GM12878 (cell line): ENCODE measurements at regions of chr15 and their contacts with region 1.

Region 1: GRCh38 chr15:42504631-42505030 is 9.2 kb downstream of the SNAP23 start:
- DNase-seq: no peak
- ATAC-seq: peak; percentile 23
- H3K4me3 ChIP-seq: peak overlapping the region; percentile 44; the same call in 1 of the 2 replicates
- H3K27ac ChIP-seq: peak overlapping the region; percentile 81
- H3K4me1 ChIP-seq: peaks cover 50% of the 10 kb centered on the region
- H3K27me3 ChIP-seq: no peaks in the 10 kb centered on the region
- CTCF ChIP-seq: no peak
- EP300 ChIP-seq: no peak
- POLR2A ChIP-seq: no peak
- RAD21 ChIP-seq: no peak

Region 2: GRCh38 chr15:42332331-42332730 is 172.3 kb before region 1 on chr15:
- CTCF ChIA-PET with region 1: no interaction called
- POLR2A ChIA-PET with region 1: no interaction called
- RAD21 ChIA-PET with region 1: no interaction called
- SMC1A ChIA-PET with region 1: no interaction called
- in situ Hi-C with region 1: no loop called
- intact Hi-C with region 1: no loop called
- DNase-seq: no peak
- ATAC-seq: no peak
- H3K4me3 ChIP-seq: no peak overlapping the region
- H3K27ac ChIP-seq: no peak overlapping the region
- H3K4me1 ChIP-seq: no peaks in the 10 kb centered on the region
- H3K27me3 ChIP-seq: no peaks in the 10 kb centered on the region
- CTCF ChIP-seq: no peak
- EP300 ChIP-seq: no peak
- POLR2A ChIP-seq: no peak
- RAD21 ChIP-seq: no peak

Region 3: DNA sequence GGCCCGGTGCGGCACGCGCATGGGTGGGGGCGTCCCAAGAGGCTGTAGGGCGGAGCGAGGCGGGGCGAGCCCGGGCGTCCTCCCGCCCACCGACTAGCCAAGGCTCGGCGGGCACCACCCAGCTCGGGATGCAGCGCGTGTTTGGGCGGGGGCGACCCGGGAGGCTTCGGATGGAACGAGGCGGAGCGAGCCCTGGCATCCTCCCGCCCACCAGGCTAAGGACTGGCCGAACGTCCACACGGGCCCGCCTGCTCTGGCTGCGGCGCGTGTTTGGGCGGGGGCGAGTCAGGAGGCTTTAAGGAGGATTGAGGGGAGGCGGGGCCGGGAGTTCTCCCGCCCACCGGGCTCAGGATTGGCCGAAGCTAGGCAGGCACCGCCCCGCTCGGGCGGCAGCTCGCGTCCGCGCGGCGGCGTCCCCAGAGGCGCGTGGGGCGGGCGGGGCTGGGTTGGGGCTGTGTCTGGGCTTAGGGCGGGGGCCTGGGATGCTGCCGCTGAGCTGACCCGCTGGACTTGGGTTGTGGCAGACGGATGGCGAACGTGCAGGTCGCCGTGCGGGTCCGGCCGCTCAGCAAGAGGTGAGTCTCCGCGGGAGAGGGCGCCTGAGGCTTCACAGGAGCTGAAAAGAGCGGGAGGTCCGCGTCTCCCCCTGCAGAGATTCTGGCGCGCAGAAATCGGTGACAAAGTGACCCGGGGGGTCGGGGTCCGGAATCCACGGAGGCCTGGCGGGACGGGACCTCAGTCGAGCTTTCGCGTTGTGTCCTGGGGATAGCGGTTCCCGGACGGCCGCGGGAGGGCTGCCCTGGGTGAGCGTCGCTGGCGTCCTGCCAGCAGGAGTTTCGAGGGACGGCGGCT is 70.8 kb after region 1 on chr15 and contains the start of gene STARD9:
- CTCF ChIA-PET with region 1: no interaction called
- POLR2A ChIA-PET with region 1: interaction called, 5 read pairs
- RAD21 ChIA-PET with region 1: interaction called, 12 read pairs
- SMC1A ChIA-PET with region 1: interaction called, 4 read pairs
- in situ Hi-C with region 1: no loop called
- intact Hi-C with region 1: no loop called
- DNase-seq: peak; percentile 87
- ATAC-seq: peak; percentile 94
- H3K4me3 ChIP-seq: peak within 1 kb of the TSS; percentile 89
- H3K27ac ChIP-seq: peak within 1 kb of the TSS; percentile 57; the same call in 1 of the 2 replicates
- H3K4me1 ChIP-seq: peaks cover 24% of the 10 kb centered on the region
- H3K27me3 ChIP-seq: no peaks in the 10 kb centered on the region
- CTCF ChIP-seq: no peak; a peak in 1 of 6 replicates
- EP300 ChIP-seq: no peak
- POLR2A ChIP-seq: peak; percentile 97
- RAD21 ChIP-seq: no peak
- polyA plus RNA-seq, gene STARD9: 0.58 to 1.1 TPM